MCF 10A (cell line): ENCODE measurements at regions of chr19 and their contacts with region 1.

Region 1: DNA sequence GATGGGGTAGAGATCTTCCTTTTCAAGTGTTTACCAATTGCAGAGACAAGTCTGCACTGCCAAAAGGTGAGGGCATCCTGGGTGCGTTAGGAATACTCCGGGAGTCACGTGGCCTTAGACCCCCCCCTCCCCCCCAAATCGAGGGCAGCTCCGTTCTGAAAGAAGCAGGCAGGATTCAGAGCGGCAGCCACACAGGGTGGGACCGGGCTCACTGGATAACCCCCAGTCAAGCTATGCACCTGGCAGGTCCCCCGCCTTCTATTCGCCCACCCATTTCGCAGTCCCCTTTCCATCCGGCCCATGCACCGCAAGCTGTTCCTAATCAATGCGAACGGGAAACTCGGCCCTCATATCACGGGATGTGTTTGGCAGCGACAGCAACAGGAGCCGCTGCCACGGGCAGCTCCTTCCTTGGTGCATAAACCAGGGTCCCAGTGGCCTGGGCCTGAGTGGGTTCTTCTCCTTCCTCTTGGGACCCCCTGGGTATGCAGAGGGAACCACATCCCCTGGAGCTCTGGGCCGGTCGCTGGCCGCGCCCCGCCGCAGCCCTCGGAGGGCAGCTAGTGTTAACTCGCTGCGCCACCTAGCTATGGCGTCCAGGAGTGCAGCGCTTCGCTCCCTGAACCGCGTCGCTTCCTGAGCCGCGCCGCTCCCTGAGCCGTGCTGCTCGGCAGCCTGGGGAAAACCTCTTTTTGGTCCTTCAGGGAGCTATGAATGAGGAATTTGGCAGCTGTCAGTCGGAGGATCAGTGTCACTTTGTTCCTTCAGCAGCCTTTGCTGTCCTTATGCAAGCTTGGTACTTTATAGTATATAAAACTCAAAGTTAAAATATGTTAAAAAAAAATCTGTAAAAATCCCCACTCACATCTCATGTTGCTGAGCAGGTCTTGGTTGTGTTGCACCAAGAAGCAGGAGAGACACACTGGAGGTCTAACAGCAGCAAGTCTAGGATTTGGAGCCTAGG is 41.4 kb downstream of the LYL1 start:
- DNase-seq: peak; percentile 81
- H3K4me3 Mint-ChIP-seq: peak overlapping the region; percentile 58
- H3K27ac Mint-ChIP-seq: no peak overlapping the region
- H3K4me1 Mint-ChIP-seq: peaks cover 8% of the 10 kb centered on the region
- H3K27me3 Mint-ChIP-seq: no peaks in the 10 kb centered on the region
- CTCF ChIP-seq: peak; percentile 95

Region 2: GRCh38 chr19:12974301-12975220 is 86.7 kb before region 1 on chr19:
- CTCF ChIA-PET with region 1: interaction called, 334 read pairs
- POLR2A ChIA-PET with region 1: interaction called, 10 read pairs
- intact Hi-C with region 1: loop called (anchors 1 kb)
- DNase-seq: no peak
- H3K4me3 Mint-ChIP-seq: no peak overlapping the region
- H3K27ac Mint-ChIP-seq: no peak overlapping the region
- H3K4me1 Mint-ChIP-seq: peaks cover 6% of the 10 kb centered on the region
- H3K27me3 Mint-ChIP-seq: no peaks in the 10 kb centered on the region
- CTCF ChIP-seq: no peak

Region 3: GRCh38 chr19:12995596-12996405 is 65.4 kb before region 1 on chr19:
- CTCF ChIA-PET with region 1: interaction called, 20 read pairs
- POLR2A ChIA-PET with region 1: no interaction called
- intact Hi-C with region 1: no loop called
- DNase-seq: no peak
- H3K4me3 Mint-ChIP-seq: peak overlapping the region; percentile 74
- H3K27ac Mint-ChIP-seq: peak overlapping the region; percentile 84
- H3K4me1 Mint-ChIP-seq: peaks cover 16% of the 10 kb centered on the region
- H3K27me3 Mint-ChIP-seq: no peaks in the 10 kb centered on the region
- CTCF ChIP-seq: no peak

Region 4: GRCh38 chr19:13012690-13013608 is 48.3 kb before region 1 on chr19:
- CTCF ChIA-PET with region 1: interaction called, 30 read pairs
- POLR2A ChIA-PET with region 1: interaction called, 9 read pairs
- intact Hi-C with region 1: no loop called
- DNase-seq: peak; percentile 68
- H3K4me3 Mint-ChIP-seq: peak overlapping the region; percentile 71
- H3K27ac Mint-ChIP-seq: peak overlapping the region; percentile 89
- H3K4me1 Mint-ChIP-seq: peaks cover 38% of the 10 kb centered on the region
- H3K27me3 Mint-ChIP-seq: no peaks in the 10 kb centered on the region
- CTCF ChIP-seq: no peak

Region 5: DNA sequence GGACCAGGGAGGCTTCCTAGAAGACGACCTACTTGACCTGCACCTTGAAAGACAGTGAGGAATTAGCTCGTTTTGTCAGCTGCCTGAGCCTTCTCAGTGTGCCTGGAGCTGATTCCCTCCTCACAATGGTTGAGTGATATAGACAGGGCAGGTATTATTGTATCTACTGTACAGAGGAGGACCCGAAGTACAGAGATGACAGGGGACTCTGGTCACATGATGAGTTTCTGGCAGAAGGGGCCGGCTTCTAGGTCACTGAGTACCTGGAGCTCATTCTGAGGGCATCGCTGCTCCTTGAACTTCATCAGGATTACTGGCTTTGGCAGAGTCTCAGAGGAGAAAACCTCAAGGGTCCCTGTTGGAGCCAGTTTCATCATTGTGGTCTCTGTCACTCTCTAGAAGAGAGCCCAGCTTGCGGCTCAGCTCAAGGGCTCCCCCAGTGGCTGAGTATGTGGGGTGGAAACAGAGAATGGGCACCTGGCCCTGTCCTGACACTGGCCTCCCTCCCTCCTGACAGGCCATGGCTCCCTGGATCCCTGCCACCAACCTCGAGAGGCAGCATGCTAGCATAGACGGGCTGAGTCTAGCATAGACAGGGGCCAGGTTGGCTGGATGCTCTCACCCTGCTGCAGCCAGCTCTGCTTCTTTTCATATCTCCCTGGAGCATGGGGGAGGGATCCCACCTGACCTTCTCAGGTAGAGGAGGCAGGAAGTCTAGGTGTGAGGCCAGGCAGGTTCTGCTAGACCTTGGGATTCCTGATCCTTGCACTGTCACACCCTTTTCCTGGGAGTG is 27.2 kb before region 1 on chr19:
- CTCF ChIA-PET with region 1: interaction called, 40 read pairs
- POLR2A ChIA-PET with region 1: interaction called, 3 read pairs
- intact Hi-C with region 1: loop called (anchors 2 kb)
- DNase-seq: peak; percentile 77
- H3K4me3 Mint-ChIP-seq: no peak overlapping the region
- H3K27ac Mint-ChIP-seq: no peak overlapping the region
- H3K4me1 Mint-ChIP-seq: peaks cover 37% of the 10 kb centered on the region
- H3K27me3 Mint-ChIP-seq: no peaks in the 10 kb centered on the region
- CTCF ChIP-seq: peak; percentile 68

Region 6: DNA sequence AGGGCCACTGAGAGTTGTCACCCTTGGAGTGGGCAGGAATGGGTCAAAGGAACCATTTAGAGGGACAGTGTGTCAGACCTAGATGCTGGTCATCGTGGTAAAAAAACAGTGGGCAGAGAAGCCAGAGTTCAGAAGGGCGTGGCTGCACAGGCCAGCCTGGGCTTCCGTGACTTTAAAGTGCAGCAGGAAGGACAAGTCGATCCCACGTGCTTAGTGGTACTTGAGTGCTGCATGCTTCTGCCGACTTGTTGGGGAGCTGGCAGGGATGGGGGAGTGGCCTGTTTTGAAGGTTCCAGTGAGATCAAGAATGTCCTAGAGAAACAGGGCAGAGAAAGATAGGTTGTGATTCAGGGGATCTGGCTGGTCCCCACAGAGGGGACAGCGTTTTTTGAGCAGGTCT is 24.4 kb after region 1 on chr19:
- CTCF ChIA-PET with region 1: interaction called, 17 read pairs
- POLR2A ChIA-PET with region 1: no interaction called
- intact Hi-C with region 1: no loop called
- DNase-seq: no peak
- H3K4me3 Mint-ChIP-seq: no peak overlapping the region
- H3K27ac Mint-ChIP-seq: peak overlapping the region; percentile 70
- H3K4me1 Mint-ChIP-seq: no peaks in the 10 kb centered on the region
- H3K27me3 Mint-ChIP-seq: no peaks in the 10 kb centered on the region
- CTCF ChIP-seq: no peak

Region 7: DNA sequence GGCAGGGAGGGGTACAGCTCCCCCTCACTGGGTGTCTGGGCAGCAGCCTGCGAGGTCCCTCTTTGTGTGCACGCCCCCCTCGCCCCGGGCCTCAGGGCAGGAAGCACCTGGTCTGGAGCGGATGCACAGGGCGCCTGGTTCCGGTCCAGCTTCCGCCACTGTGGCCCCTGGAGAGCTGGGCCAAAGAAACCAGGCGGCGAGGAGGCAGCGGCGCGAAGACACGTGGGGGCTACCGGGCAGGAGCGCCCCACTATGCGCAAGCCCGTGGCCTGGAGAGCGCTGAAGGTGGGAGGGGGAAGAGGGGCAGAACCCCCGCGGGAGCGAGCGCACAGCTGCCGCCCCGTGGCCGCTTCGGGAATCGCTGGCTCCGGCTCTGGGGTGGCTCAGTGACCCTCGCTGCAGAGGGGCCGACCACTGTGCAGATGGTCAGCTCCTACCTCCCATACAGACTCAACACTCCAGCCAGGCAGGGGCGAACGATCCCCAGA is 43.2 kb after region 1 on chr19:
- CTCF ChIA-PET with region 1: no interaction called
- POLR2A ChIA-PET with region 1: no interaction called
- intact Hi-C with region 1: no loop called
- DNase-seq: no peak
- H3K4me3 Mint-ChIP-seq: no peak overlapping the region
- H3K27ac Mint-ChIP-seq: no peak overlapping the region
- H3K4me1 Mint-ChIP-seq: no peaks in the 10 kb centered on the region
- H3K27me3 Mint-ChIP-seq: no peaks in the 10 kb centered on the region
- CTCF ChIP-seq: no peak